ENCODE measurements at regions of chr1 and their contacts with region 1.

Region 1: DNA sequence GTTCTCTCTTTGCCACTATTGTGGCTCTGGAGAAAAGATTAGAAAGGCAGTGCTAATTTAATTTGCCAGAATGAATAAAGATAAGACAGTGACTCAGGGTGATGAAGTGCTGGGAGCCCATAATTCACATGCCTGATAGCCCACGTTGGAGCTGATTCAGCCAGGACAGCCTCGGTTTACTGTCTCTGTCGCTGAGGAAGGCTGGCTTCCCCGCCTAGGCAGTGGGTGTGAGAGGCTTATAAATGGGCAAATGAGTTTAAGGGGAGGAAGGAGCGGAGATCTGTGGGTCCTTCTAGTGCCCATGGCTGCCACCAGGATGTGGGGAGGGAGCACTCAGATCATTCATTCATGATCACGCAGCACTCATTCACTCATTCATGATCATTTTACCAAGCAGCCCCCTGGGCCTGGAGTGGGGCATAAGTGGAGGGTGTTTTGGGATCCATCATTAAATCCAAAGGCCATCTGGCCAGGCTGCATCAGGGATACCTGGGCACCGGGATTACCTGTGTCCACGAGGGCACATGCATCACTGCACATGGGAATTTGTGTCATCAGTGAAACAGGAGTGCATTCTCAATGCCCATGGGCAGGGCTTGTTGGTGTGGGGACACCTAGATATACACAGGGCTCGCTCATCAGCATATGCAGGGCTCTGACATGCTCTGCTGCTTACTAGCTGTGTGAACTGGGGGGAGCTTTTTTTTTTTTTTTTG is 315.4 kb downstream of the MATN1 start:
- DNase-seq: no peak
- ATAC-seq: no peak
- H3K4me3 ChIP-seq: no peak overlapping the region
- H3K27ac ChIP-seq: no peak overlapping the region
- H3K4me1 ChIP-seq: no peaks in the 10 kb centered on the region
- H3K27me3 ChIP-seq: peaks cover 0 to 1% of the 10 kb centered on the region in 2 experiments; a peak in 2 of 4 replicates
- CTCF ChIP-seq: no peak
- EP300 ChIP-seq: no peak
- POLR2A ChIP-seq: no peak
- RAD21 ChIP-seq: no peak

Region 2: GRCh38 chr1:29394521-29395225 is 1013.4 kb before region 1 on chr1:
- CTCF ChIA-PET with region 1: no interaction called
- POLR2A ChIA-PET with region 1: no interaction called
- RAD21 ChIA-PET with region 1: no interaction called
- SMC1A ChIA-PET with region 1: no interaction called
- in situ Hi-C with region 1: loop called (anchors 5 kb)
- intact Hi-C with region 1: no loop called
- DNase-seq: no peak
- ATAC-seq: no peak
- H3K4me3 ChIP-seq: no peak overlapping the region
- H3K27ac ChIP-seq: no peak overlapping the region
- H3K4me1 ChIP-seq: no peaks in the 10 kb centered on the region
- H3K27me3 ChIP-seq: peaks cover 0 to 6% of the 10 kb centered on the region in 2 experiments; a peak in 1 of 4 replicates
- CTCF ChIP-seq: no peak
- EP300 ChIP-seq: no peak
- POLR2A ChIP-seq: no peak
- RAD21 ChIP-seq: no peak

Region 3: DNA sequence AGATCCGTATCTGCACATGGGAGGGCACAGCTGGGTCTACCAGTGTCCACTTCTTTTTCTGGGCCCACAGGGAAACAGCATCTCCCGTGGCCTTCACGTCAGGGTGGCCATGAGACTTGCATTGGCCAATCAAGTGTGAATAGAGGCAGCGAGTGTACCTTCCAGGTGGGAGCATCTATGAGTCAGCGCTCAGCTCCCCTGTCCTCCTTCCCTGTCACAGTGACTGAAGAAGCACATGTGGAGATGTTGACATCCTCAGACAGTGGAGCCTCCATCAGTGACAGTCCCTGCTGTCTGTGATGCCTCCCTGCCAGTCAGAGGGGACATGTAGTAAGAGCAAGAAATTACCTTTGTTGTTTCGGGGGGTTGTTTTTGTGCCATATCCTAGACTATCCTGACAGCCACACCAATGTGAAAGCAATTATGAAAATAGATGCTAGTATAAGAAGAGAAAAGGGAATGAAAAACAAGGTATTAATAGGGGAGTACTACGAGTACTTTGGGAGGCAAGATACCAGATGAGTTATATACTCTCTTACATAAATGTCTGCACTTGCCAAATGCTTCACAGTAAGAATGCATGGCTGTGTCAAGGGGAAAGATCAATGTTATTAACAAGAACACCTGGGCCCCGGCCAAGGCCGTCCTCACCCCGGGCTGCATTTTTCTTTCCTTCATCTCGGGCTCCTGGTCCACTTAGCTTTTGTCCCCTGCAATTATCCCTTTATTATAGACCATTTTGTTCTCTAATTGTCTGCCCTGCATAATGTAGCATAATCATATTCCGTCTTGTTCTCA is 229.4 kb after region 1 on chr1:
- CTCF ChIA-PET with region 1: no interaction called
- POLR2A ChIA-PET with region 1: no interaction called
- RAD21 ChIA-PET with region 1: no interaction called
- SMC1A ChIA-PET with region 1: no interaction called
- in situ Hi-C with region 1: no loop called
- intact Hi-C with region 1: no loop called
- DNase-seq: no peak
- ATAC-seq: no peak
- H3K4me3 ChIP-seq: no peak overlapping the region
- H3K27ac ChIP-seq: no peak overlapping the region
- H3K4me1 ChIP-seq: no peaks in the 10 kb centered on the region
- H3K27me3 ChIP-seq: no peaks in the 10 kb centered on the region; a peak in 2 of 4 replicates
- CTCF ChIP-seq: no peak
- EP300 ChIP-seq: no peak
- POLR2A ChIP-seq: no peak
- RAD21 ChIP-seq: no peak

Measured in GM12878 (cell line).